Right ventricle myocardium inferior (tissue), 1 donor: ENCODE measurements at regions of chr4 and their contacts with region 1.

Region 1: DNA sequence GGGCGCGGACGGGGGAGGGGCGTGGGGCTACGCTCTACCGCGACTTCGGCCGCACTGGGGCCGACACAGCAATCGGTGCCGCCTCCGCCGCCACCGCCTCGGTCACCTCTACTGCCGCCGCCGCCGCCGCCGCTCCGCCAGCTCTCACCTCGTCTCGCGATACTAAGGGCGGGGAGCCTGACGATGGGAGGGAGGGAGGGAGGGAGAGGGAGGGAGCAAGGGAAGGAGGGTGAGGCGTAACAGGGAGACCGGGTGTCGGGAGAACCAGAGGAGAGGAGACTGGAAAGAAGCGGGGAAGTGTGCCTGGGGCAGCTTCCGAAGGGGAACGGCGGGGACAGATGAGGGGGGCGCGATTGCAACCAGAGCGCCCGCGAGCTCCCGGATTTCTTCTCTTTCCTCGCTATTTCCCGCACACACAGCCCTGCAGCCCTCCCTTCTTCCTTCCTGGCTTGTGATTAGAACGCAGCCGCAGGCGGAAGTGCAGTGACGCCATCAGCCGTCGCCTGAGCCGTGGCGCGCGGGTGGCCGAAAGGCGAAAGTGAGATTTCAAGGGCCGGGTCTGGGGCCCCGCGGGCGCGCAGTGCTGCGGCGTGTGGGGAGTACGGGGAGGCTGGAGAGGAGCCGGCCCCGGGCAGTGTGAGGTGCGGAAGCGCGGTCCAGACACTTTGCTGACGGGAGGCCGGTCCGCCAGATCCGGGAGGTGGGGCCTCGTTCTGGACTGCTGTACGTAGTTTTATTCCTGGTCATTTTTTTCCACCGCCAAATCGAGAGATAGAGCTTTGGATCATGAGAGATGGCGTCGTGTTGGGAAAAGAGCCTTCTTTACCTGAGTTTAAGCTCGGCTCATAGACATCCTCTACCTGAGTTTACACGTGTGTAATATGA is at the start of gene ANKRD17:
- DNase-seq: peak; percentile 96
- ATAC-seq: peak; percentile 92
- total RNA-seq, gene ANKRD17: 50.7 TPM

Region 2: GRCh38 chr4:73127839-73128453 is 131.0 kb before region 1 on chr4:
- intact Hi-C with region 1: loop called (anchors 5 kb)
- DNase-seq: no peak
- ATAC-seq: peak; percentile 44

Region 3: GRCh38 chr4:73222466-73223257 is 36.3 kb before region 1 on chr4:
- intact Hi-C with region 1: loop called (anchors 5 kb)
- DNase-seq: no peak
- ATAC-seq: peak; percentile 99

Region 4: DNA sequence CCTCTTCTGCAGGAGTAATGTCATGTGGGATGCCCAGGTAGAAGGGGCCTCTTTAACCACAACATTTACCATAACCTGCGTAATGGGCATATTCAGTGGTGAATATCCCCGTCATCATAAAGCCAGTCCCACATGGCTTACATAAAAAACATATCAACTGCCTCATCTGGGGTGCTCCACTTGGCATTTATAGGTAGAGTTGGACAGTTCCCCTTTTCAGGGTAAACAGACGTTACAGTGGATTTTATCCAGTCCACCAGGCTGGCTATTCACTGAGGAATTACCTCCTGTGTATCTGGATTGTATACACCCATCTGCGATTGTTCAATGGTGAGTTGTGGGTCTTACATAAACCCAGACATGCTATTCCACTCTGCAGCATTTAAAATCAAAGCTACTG is 70.4 kb after region 1 on chr4:
- intact Hi-C with region 1: no loop called
- DNase-seq: no peak
- ATAC-seq: no peak

Region 5: DNA sequence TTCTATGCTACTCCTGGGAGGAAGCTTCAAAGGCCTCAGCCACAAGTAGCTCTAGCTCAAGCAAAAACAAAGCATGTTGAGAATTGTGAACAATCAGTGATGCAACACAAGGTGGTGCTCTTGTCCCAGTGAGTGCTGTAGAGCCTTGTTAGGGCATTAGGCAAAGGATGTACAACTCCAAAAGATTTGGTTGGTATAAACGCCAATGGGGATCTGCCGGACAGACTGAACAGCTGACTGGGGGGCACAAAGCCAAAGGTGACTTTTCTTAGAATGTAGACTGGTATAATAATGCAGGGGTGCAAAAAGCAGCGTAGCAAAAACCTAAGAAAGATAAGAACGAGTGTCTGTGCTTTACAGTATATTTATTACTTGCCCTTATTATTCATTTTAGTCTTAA is 82.5 kb after region 1 on chr4:
- intact Hi-C with region 1: no loop called
- DNase-seq: no peak
- ATAC-seq: no peak